ENCODE measurements at regions of chr6 and their contacts with region 1.

Region 1: GRCh38 chr6:52522151-52522626 is 54.7 kb downstream of the TRAM2 start:
- DNase-seq: no peak
- ATAC-seq: no peak
- H3K4me3 ChIP-seq: no peak overlapping the region
- H3K4me3 Mint-ChIP-seq: no peak overlapping the region
- H3K27ac ChIP-seq: no peak overlapping the region
- H3K27ac Mint-ChIP-seq: no peak overlapping the region
- H3K4me1 ChIP-seq: no peaks in the 10 kb centered on the region
- H3K4me1 Mint-ChIP-seq: peaks cover 0 to 28% (median 7%) of the 10 kb centered on the region in 7 donors
- H3K27me3 ChIP-seq: no peaks in the 10 kb centered on the region
- H3K27me3 Mint-ChIP-seq: no peaks in the 10 kb centered on the region

Region 2: DNA sequence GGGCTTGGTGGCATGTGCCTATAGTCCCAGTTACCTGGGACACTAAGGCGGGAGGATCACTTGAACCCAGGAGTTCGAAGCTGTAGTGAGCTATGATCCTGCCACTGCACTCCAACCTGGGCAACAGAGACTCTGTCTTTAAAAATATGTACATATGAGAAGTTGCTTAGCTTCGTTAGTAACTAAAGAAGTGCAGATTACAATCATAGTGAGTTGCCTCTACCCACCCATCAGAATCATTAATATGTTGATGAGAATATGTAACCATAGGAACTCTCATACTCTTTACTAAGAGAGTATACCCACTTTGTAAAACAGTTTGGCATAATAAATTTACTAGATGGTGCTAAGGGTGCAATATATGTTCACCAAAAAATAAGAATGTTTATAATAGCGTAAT is 48.0 kb before region 1 on chr6:
- CTCF ChIA-PET with region 1: no interaction called
- POLR2A ChIA-PET with region 1: no interaction called
- intact Hi-C with region 1: loop called in 1 of 2 experiments (anchors 5 kb)
- DNase-seq: no peak
- ATAC-seq: no peak
- H3K4me3 ChIP-seq: no peak overlapping the region
- H3K4me3 Mint-ChIP-seq: no peak overlapping the region
- H3K27ac ChIP-seq: no peak overlapping the region
- H3K27ac Mint-ChIP-seq: no peak overlapping the region
- H3K4me1 ChIP-seq: no peaks in the 10 kb centered on the region
- H3K4me1 Mint-ChIP-seq: no peaks in the 10 kb centered on the region
- H3K27me3 ChIP-seq: no peaks in the 10 kb centered on the region
- H3K27me3 Mint-ChIP-seq: peaks cover 0 to 15% (median 0%) of the 10 kb centered on the region in 5 donors

Region 3: GRCh38 chr6:52691718-52692117 is 169.5 kb after region 1 on chr6:
- CTCF ChIA-PET with region 1: no interaction called
- POLR2A ChIA-PET with region 1: no interaction called
- intact Hi-C with region 1: no loop called
- DNase-seq: no peak
- ATAC-seq: no peak
- H3K4me3 ChIP-seq: no peak overlapping the region
- H3K4me3 Mint-ChIP-seq: no peak overlapping the region
- H3K27ac ChIP-seq: no peak overlapping the region
- H3K27ac Mint-ChIP-seq: no peak overlapping the region
- H3K4me1 ChIP-seq: no peaks in the 10 kb centered on the region
- H3K4me1 Mint-ChIP-seq: no peaks in the 10 kb centered on the region
- H3K27me3 ChIP-seq: no peaks in the 10 kb centered on the region
- H3K27me3 Mint-ChIP-seq: peaks cover 0 to 12% (median 0%) of the 10 kb centered on the region in 5 donors

Region 4: DNA sequence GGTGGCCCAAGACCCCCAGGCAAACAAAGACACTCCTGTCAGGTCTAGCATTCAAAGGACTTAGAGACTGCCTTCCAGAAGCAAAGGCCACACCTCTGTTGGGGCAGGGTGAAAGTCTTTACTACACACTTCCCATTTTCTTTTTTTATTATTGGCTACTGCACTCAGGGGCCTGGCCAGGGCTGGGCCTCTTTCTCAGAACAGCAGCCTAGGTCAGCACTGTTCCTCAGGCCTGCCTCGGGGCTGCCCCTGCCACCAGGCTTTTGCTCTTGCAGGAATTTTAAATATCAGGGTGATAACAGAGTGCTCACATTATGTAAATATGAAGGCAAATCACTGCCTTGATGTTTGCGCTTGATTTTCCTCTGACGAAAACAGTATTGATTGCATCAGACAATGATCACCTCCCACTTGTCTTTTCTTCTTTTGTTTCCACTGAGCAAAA is 454.4 kb after region 1 on chr6:
- CTCF ChIA-PET with region 1: no interaction called
- POLR2A ChIA-PET with region 1: no interaction called
- intact Hi-C with region 1: no loop called
- DNase-seq: peak in 1 of 9 donors; percentile 45
- ATAC-seq: peak; percentile 60
- H3K4me3 ChIP-seq: no peak overlapping the region
- H3K4me3 Mint-ChIP-seq: no peak overlapping the region
- H3K27ac ChIP-seq: no peak overlapping the region
- H3K27ac Mint-ChIP-seq: peak overlapping the region in 1 of 9 donors; percentile 30
- H3K4me1 ChIP-seq: no peaks in the 10 kb centered on the region
- H3K4me1 Mint-ChIP-seq: peaks cover 0 to 27% (median 0%) of the 10 kb centered on the region in 7 donors
- H3K27me3 ChIP-seq: no peaks in the 10 kb centered on the region
- H3K27me3 Mint-ChIP-seq: peaks cover 0 to 14% (median 10%) of the 10 kb centered on the region in 5 donors

Measured in naive thymus-derived CD4-positive, alpha-beta T cell (primary cell).